Tibial artery (tissue), 4 donors: ENCODE measurements at regions of chr13 and their contacts with region 1.

Region 1: DNA sequence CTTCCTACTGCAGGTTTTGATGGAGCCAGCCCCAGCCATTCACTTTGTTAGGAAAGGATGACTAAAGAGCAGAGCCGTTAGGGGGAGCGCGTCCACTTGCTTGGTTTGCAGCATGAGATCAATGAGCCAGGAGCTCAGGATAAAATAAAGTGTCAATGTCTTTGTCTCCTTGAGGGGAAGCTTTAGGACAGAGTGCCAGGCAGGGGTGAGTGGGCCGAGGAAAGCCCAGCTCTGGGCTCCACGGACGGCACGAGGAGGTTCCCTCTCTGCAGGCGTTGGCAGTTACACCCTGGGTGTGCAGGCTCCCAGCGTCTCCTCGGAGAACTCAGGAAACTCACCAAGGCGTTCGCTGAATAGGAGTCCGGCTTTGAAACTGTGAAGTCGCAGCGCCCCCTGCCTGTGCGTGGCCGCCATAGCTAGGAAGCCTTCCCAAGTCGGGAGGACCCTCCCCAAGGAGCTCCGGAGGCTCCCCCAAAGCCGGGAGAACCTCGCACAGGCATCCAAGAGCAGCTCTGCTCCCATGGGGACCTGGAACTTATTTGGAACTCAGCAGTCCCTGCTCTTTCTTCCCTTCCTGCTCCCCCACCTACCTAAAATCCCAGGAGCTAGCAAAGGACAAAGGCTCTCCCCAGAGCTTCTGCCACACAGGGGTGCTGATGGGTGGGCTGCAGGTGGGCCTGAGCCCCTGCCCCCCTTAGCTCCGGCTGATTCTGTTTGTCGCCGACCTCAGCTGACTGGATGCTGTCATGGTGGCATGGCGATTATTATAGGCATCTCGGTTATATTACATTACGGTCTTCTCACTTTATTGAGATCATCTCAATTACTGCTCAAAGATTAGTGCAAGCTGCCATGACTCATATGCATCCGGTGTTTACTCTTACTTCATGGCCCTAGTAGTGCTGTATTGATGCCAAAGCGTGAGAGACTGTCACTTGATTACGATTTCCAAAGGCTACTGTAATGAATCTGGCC is 34.4 kb downstream of the GSX1 start:
- DNase-seq: peak; percentile 64 to 85
- H3K4me3 ChIP-seq: peak overlapping the region in 1 of 2 donors; percentile 27
- H3K27ac ChIP-seq: no peak overlapping the region
- H3K4me1 ChIP-seq: peaks cover 0 to 10% (median 6%) of the 10 kb centered on the region in 4 donors
- H3K27me3 ChIP-seq: peaks cover 0 to 65% of the 10 kb centered on the region in 2 donors
- CTCF ChIP-seq: peak; percentile 87 to 88

Region 2: DNA sequence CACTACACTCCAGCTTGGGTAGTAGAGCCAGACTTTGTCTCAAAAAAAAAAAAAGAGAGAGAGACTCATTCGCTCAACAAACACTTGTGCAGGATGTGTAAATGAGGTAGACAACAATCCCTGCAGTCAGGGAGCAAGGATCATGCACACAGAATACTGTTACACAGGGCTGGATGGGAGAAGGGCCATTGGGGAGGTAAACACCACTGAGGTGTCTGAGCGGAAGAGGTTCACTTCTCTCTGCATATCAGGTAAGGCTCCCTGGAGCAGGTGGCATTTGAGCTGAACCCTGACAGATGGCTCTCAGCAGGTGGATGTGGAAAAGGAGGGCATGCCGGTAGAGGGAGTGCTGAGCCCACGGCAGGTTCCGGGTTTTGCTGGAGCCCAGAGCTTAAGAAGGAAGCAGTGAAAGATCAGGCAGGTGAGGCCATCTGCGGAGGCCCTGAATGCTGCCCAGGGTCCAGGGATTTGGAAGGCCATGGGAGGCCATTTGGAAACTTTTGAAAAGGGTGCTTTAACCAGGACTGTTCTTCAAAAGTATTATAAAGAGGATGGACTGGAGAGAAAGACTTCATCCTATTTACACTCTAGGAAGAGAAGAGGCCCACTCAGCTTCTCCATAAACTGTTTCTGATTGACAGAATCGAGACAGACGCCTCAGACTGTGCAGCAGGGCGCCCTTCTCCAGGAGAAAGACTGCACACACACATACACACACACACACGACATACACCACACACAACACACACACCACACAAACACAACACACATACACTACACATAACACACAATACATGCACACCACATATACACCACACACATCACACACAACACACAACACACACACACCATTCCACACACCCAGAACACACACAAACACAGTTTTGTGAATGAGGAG is 854.4 kb before region 1 on chr13:
- intact Hi-C with region 1: loop called (anchors 10 kb)
- DNase-seq: no peak
- H3K4me3 ChIP-seq: no peak overlapping the region
- H3K27ac ChIP-seq: no peak overlapping the region
- H3K4me1 ChIP-seq: no peaks in the 10 kb centered on the region
- H3K27me3 ChIP-seq: peaks cover 0 to 30% of the 10 kb centered on the region in 2 donors
- CTCF ChIP-seq: no peak

Region 3: DNA sequence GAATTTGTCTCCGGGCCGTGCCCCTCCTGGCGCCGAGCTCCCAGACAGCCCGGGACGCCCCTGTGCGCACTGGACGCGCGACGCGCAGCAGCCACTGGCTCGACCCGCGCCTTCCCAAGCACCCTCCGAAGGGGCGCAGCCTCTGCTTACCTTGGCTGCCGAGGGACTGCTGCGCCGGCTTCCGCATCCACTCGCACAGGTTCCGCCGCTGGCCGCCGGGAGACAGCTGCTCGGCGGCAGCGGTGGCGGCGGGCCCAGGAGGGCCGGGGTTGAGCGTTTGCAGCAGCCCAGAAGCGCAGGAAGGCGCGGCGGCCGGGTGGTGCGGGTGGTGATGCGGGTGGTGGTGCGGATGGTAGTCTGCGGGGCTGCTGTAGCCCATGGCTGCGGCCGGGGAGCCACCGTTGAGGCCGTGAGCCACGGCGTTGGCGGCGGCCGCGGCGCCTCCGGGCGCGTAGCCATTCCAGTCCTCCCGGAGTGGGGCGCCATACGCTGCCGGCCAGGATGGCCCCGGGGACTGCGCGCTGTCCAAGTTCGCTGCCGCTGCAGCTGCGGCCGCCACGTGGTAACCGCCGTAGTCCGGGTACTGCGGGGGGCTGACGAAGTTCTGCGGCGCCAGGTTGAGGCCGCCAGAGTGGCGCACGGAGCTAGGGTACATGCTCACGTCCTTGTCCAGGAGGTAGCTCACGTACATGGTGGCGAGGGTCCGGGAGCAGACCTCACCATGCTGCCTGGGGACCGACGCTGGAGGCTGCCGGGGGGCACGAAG is 141.8 kb after region 1 on chr13:
- intact Hi-C with region 1: loop called (anchors 5 kb)
- DNase-seq: no peak
- H3K4me3 ChIP-seq: peak overlapping the region in 1 of 2 donors; percentile 1
- H3K27ac ChIP-seq: no peak overlapping the region
- H3K4me1 ChIP-seq: peaks cover 0 to 48% (median 25%) of the 10 kb centered on the region in 4 donors
- H3K27me3 ChIP-seq: peaks cover 0 to 96% of the 10 kb centered on the region in 2 donors
- CTCF ChIP-seq: no peak